Heart right ventricle (tissue), 16 donors: ENCODE measurements at regions of chr9 and their contacts with region 1.

Region 1: DNA sequence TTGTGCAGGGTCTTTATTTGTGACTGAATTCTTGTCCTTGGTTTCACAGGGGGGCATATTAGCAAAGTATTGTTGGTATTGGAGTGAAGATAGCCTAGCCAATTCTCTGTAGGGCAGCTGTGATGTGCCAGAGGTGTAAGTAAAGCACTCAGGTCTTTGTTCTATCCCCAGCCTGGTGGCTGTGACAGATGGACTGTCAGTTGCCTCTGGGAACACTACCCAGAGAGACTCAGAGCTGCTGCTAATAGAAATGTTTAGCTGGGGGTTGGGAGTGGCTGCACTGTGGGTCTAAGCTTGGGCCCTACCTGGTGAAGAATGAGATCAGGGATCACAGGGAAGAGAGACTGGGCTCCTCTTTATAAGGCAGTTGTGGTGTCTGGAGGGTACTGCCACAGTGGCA is 1006.5 kb upstream of the TYRP1 start:
- DNase-seq: no peak
- ATAC-seq: no peak
- H3K4me3 ChIP-seq: no peak overlapping the region
- H3K27ac ChIP-seq: no peak overlapping the region
- H3K4me1 ChIP-seq: no peaks in the 10 kb centered on the region
- H3K27me3 ChIP-seq: no peaks in the 10 kb centered on the region
- CTCF ChIP-seq: no peak

Region 2: GRCh38 chr9:11618241-11618805 is 68.4 kb before region 1 on chr9:
- intact Hi-C with region 1: loop called in 1 of 10 experiments (anchors 10 kb)
- DNase-seq: no peak
- ATAC-seq: peak in 1 of 8 donors; percentile 28
- H3K4me3 ChIP-seq: no peak overlapping the region
- H3K27ac ChIP-seq: no peak overlapping the region
- H3K4me1 ChIP-seq: no peaks in the 10 kb centered on the region
- H3K27me3 ChIP-seq: no peaks in the 10 kb centered on the region
- CTCF ChIP-seq: no peak

Region 3: DNA sequence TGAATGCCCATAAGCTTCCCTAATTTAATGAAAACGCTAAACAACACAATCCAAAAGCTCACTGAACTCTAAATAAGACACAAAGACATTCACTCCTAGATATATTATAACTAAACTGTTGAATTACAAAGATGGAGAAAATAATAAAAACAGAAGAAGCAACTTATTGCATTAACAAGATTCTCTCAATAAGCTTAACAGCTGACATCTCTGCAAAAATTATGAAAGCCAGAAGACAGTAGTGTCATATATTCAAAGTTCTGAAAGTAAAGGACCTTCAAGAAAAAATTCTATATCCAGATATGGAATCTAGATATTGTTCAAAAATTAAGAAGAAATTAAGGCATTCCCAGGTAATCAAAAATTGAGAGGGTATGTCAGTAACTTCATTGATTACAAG is 48.7 kb after region 1 on chr9:
- intact Hi-C with region 1: no loop called
- DNase-seq: no peak
- ATAC-seq: no peak
- H3K4me3 ChIP-seq: no peak overlapping the region
- H3K27ac ChIP-seq: no peak overlapping the region
- H3K4me1 ChIP-seq: no peaks in the 10 kb centered on the region
- H3K27me3 ChIP-seq: no peaks in the 10 kb centered on the region
- CTCF ChIP-seq: no peak

Region 4: GRCh38 chr9:11758016-11758415 is 71.3 kb after region 1 on chr9:
- intact Hi-C with region 1: loop called in 1 of 10 experiments (anchors 2 kb)
- DNase-seq: no peak
- ATAC-seq: no peak
- H3K4me3 ChIP-seq: no peak overlapping the region
- H3K27ac ChIP-seq: no peak overlapping the region
- H3K4me1 ChIP-seq: no peaks in the 10 kb centered on the region
- H3K27me3 ChIP-seq: no peaks in the 10 kb centered on the region
- CTCF ChIP-seq: no peak